ENCODE measurements at regions of chr9 and their contacts with region 1.

Region 1: DNA sequence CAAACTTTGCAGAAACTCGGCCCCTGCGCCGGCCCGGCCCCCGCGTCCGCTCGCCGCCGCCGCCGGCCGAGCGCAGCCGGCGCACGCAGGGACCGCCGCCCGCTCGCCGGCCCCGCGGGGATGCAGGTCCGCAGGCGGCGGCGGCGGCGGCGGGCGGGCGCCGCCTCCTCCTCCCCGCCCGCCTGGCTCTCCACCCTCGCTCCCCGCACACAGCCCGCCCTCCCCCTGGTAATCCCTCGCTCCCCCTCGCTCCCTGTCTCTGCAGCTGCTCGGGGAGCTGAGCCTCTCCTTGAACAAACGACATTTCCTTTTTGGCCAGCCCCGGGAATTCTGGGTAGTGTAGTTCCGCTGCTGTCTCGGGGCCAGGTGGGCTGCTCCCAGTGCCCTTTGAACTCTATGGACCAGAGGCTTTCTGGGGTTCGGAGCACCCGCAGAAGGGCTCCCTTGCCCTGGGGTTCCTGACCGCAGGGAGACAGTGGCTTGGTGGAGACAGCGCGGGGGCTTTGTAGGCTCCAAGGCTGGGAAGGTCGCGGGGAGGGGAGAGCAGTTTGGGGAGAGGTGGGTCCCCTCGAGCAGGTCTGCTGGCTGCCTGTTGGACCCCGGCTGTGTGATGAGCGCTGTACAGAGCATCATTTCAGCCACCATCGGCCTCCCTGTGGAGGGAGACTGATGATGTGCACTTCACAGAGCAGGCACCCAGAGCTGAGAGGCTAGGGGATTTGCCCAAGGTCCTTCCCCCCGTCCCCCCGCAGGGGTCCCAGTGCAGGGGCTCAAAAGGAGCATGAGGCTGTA is 1.8 kb upstream of the FAM78A start:
- DNase-seq: peak; percentile 69
- H3K4me3 ChIP-seq: peak overlapping the region; percentile 47 to 63
- H3K27ac ChIP-seq: peak overlapping the region in 1 of 2 donors; percentile 35
- H3K4me1 ChIP-seq: no peaks in the 10 kb centered on the region
- H3K27me3 ChIP-seq: no peaks in the 10 kb centered on the region
- CTCF ChIP-seq: no peak
- POLR2A ChIP-seq: no peak

Region 2: GRCh38 chr9:131324736-131325679 is 46.9 kb after region 1 on chr9:
- intact Hi-C with region 1: loop called (anchors 5 kb)
- DNase-seq: no peak
- H3K4me3 ChIP-seq: no peak overlapping the region
- H3K27ac ChIP-seq: no peak overlapping the region
- H3K4me1 ChIP-seq: no peaks in the 10 kb centered on the region
- H3K27me3 ChIP-seq: no peaks in the 10 kb centered on the region
- CTCF ChIP-seq: no peak
- POLR2A ChIP-seq: no peak

Measured in prostate gland (tissue), 2 donors.